ENCODE measurements at regions of chr22 and their contacts with region 1.

Region 1: GRCh38 chr22:19909350-19910179 is 32.0 kb upstream of the COMT start:
- DNase-seq: peak; percentile 84 to 91 (median 85)
- ATAC-seq: peak; percentile 91
- H3K4me3 ChIP-seq: no peak overlapping the region
- H3K27ac ChIP-seq: no peak overlapping the region
- H3K4me1 ChIP-seq: no peaks in the 10 kb centered on the region
- H3K27me3 ChIP-seq: no peaks in the 10 kb centered on the region
- CTCF ChIP-seq: peak; percentile 76 to 95 (median 87)
- POLR2A ChIP-seq: no peak

Region 2: DNA sequence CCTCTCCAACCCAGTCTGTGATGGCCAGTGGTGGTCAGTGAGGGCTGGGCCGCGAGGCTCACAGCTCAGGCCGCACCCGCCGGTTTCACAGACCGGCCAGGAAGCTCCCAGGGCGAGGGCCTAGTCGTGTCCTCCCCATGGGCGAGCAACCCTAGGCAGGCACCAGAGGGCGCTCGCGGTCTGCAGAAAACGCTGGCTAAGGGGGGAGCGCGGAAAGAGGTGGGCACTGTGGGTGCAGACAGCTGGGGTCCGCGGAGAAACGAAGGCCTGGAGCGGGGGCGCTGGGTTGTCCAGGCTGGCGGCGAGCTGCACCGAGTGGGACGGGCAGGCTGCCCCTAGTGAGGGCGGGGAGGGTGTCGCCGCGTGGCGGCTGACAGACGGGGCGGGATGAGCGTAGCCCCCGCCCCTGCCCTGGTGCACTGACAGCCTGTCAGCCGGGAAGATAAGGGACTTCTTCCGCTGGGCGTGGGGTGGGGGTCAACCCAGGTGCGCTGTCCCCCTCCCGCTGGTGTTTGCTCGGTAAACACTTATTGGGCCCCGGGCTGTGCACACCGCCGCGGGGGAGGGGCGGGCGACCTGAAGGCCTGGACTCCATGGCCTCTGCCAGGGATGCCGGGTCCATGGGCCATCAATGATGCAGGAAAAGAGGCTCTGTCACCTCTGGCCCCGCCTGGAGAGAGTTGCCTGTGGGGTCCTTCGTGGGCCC is 178.8 kb before region 1 on chr22:
- intact Hi-C with region 1: loop called (anchors 2 kb)
- DNase-seq: peak; percentile 81 to 86 (median 84)
- ATAC-seq: peak; percentile 81
- H3K4me3 ChIP-seq: no peak overlapping the region
- H3K27ac ChIP-seq: no peak overlapping the region
- H3K4me1 ChIP-seq: peaks cover 21% of the 10 kb centered on the region
- H3K27me3 ChIP-seq: no peaks in the 10 kb centered on the region
- CTCF ChIP-seq: peak; percentile 89 to 98 (median 93)
- POLR2A ChIP-seq: no peak